BJ (cell line): ENCODE measurements at regions of chr18 and their contacts with region 1.

Region 1: GRCh38 chr18:10519999-10520935 is 5.6 kb upstream of the NAPG start:
- DNase-seq: peak; percentile 56
- H3K4me3 ChIP-seq: no peak overlapping the region
- H3K27me3 ChIP-seq: no peaks in the 10 kb centered on the region
- CTCF ChIP-seq: peak; percentile 89

Region 2: DNA sequence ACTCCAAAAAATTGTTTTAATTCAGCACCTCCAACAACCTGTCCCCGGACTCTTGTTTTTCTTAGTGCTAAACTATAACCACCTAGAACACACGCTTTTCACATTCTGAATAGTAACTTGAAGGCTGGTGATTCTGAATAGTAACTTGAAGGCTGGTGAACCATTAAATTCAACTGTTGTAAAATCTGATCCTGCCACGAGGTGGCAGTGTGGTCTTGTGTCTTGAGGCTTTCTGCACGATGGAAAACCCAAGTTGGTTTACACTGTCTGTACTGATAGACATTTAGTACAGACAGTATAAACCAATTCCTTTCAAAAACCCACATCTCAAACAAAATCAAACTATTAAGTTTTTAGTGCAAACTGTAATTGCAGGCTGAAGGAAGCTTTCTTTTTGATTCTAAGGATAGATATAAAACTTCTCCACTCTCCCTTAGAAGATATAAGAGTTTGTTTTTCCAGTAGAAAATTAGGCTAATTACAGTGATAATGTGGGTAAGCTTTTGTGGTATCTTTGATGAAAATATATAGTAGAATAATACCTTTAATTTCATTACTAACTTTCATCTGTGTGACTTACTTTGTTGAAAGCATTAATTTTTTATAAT is 548.9 kb before region 1 on chr18:
- CTCF ChIA-PET with region 1: interaction called, 93 read pairs
- POLR2A ChIA-PET with region 1: no interaction called
- DNase-seq: no peak
- H3K4me3 ChIP-seq: no peak overlapping the region
- H3K27me3 ChIP-seq: peaks cover 2% of the 10 kb centered on the region; the same call in 1 of the 2 replicates
- CTCF ChIP-seq: peak; percentile 62

Region 3: GRCh38 chr18:10006311-10006893 is 513.9 kb before region 1 on chr18:
- CTCF ChIA-PET with region 1: interaction called, 25 read pairs
- POLR2A ChIA-PET with region 1: no interaction called
- DNase-seq: no peak
- H3K4me3 ChIP-seq: no peak overlapping the region
- H3K27me3 ChIP-seq: peaks cover 4% of the 10 kb centered on the region; the same call in 1 of the 2 replicates
- CTCF ChIP-seq: peak; percentile 34

Region 4: GRCh38 chr18:10015941-10016819 is 504.1 kb before region 1 on chr18:
- CTCF ChIA-PET with region 1: interaction called, 41 read pairs
- POLR2A ChIA-PET with region 1: no interaction called
- DNase-seq: peak; percentile 90
- H3K4me3 ChIP-seq: no peak overlapping the region
- H3K27me3 ChIP-seq: no peaks in the 10 kb centered on the region
- CTCF ChIP-seq: peak; percentile 72

Region 5: GRCh38 chr18:10378688-10379363 is 141.4 kb before region 1 on chr18:
- CTCF ChIA-PET with region 1: interaction called, 13 read pairs
- POLR2A ChIA-PET with region 1: no interaction called
- DNase-seq: peak; percentile 41
- H3K4me3 ChIP-seq: no peak overlapping the region
- H3K27me3 ChIP-seq: no peaks in the 10 kb centered on the region
- CTCF ChIP-seq: no peak